MCF 10A (cell line): ENCODE measurements at regions of chr12 and their contacts with region 1.

Region 1: GRCh38 chr12:52980693-52981423 is 25.4 kb upstream of the EIF4B start:
- DNase-seq: peak; percentile 96
- H3K4me3 Mint-ChIP-seq: no peak overlapping the region
- H3K27ac Mint-ChIP-seq: no peak overlapping the region
- H3K4me1 Mint-ChIP-seq: peaks cover 7% of the 10 kb centered on the region
- H3K27me3 Mint-ChIP-seq: no peaks in the 10 kb centered on the region
- CTCF ChIP-seq: peak; percentile 95

Region 2: GRCh38 chr12:52147367-52147972 is 833.4 kb before region 1 on chr12:
- CTCF ChIA-PET with region 1: interaction called, 21 read pairs
- POLR2A ChIA-PET with region 1: no interaction called
- intact Hi-C with region 1: no loop called
- DNase-seq: peak; percentile 98
- H3K4me3 Mint-ChIP-seq: peak overlapping the region; percentile 39
- H3K27ac Mint-ChIP-seq: peak overlapping the region; percentile 97
- H3K4me1 Mint-ChIP-seq: peaks cover 76% of the 10 kb centered on the region
- H3K27me3 Mint-ChIP-seq: no peaks in the 10 kb centered on the region
- CTCF ChIP-seq: no peak

Region 3: DNA sequence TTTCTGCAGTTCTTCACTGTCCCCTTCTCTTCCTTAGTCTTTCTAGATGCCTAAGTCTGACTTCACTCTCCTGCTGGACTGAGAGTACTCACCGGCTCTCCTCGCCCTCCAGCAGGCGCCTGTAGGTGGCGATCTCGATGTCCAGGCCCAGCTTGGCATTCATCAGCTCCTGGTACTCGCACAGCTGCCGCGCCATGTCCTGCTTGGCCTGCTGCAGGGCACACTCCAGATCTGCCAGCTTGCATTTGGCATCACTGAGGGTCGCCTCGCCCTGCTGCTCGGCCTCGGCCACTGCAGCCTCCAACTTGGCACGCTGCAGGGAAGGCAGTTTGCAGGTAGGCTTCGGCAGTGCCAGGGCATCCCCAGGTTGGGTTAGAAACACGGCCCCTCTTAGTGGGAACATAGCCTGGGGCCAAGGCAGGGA is 600.6 kb before region 1 on chr12:
- CTCF ChIA-PET with region 1: interaction called, 8 read pairs
- POLR2A ChIA-PET with region 1: no interaction called
- intact Hi-C with region 1: loop called (anchors 10 kb)
- DNase-seq: peak; percentile 59
- H3K4me3 Mint-ChIP-seq: no peak overlapping the region
- H3K27ac Mint-ChIP-seq: no peak overlapping the region
- H3K4me1 Mint-ChIP-seq: no peaks in the 10 kb centered on the region
- H3K27me3 Mint-ChIP-seq: no peaks in the 10 kb centered on the region
- CTCF ChIP-seq: peak; percentile 59

Region 4: DNA sequence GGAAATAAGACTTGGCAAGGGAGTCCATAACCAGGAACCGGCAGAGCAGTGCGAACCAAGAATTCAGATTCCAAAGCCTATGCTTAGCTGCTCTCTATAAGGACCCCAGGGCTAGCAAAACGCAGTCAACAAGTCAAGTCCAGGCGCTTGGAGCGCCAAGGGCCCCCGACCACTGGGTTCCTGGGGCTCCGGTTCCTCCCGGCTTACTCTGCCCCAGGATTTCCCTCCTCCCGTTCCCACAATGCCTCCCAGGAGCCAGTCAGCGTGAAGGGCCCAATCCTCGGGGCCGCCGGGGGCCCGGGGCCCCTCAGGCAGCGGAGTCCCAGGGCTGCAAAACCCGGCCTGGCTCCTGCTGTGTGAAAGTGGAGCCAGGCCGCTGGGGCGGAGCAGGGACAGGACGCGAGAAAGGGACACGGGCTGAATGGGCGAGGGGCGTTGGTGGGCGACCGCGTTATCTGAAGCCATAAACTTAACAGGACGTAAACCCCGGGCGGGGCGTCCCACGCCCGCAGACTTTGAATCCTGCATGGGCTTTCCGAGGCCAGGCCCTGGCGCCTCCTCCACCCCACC is 77.5 kb before region 1 on chr12:
- CTCF ChIA-PET with region 1: interaction called, 747 read pairs
- POLR2A ChIA-PET with region 1: interaction called, 15 read pairs
- intact Hi-C with region 1: loop called (anchors 1 kb)
- DNase-seq: peak; percentile 87
- H3K4me3 Mint-ChIP-seq: peak overlapping the region; percentile 76
- H3K27ac Mint-ChIP-seq: peak overlapping the region; percentile 82
- H3K4me1 Mint-ChIP-seq: peaks cover 28% of the 10 kb centered on the region
- H3K27me3 Mint-ChIP-seq: no peaks in the 10 kb centered on the region
- CTCF ChIP-seq: no peak

Region 5: DNA sequence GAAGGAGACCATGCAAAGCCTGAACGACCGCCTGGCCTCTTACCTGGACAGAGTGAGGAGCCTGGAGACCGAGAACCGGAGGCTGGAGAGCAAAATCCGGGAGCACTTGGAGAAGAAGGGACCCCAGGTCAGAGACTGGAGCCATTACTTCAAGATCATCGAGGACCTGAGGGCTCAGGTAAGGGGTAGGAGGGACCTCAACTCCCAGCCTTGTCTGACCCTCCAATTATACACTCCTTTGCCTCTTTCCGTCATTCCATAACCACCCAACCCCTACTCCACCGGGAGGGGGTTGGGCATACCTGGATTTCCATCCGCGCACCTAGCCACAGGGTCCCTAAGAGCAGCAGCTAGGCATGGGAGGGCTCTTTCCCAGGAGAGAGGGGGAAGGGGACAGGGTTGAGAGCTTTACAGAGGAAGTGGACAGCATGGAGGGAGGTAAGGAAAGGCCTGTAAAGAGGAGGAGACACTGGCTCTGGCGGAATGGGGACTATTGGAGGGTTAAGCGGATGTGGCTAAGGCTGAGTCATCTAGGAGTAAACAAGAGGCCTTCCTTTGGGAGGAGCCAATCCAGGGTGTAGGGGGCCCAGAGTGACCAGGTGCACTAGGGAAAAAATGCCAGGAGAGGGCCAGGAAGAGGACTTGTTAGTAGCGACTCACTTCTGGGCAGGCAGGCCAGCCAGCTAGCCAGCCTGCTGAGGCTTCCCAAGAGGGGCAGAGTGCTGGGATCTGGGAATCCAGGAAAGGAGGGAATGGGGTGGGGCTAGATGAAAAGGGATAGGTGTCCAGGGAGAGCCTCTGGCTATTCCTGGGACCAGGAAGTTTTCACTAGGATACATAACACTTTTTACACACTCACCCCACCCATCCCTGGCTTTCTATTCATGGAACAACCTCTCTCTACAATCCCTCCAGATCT is 31.2 kb before region 1 on chr12:
- CTCF ChIA-PET with region 1: interaction called, 28 read pairs
- POLR2A ChIA-PET with region 1: interaction called, 9 read pairs
- intact Hi-C with region 1: no loop called
- DNase-seq: peak; percentile 98
- H3K4me3 Mint-ChIP-seq: peak overlapping the region; percentile 95
- H3K27ac Mint-ChIP-seq: peak overlapping the region; percentile 86
- H3K4me1 Mint-ChIP-seq: peaks cover 57% of the 10 kb centered on the region
- H3K27me3 Mint-ChIP-seq: no peaks in the 10 kb centered on the region
- CTCF ChIP-seq: no peak

Region 6: DNA sequence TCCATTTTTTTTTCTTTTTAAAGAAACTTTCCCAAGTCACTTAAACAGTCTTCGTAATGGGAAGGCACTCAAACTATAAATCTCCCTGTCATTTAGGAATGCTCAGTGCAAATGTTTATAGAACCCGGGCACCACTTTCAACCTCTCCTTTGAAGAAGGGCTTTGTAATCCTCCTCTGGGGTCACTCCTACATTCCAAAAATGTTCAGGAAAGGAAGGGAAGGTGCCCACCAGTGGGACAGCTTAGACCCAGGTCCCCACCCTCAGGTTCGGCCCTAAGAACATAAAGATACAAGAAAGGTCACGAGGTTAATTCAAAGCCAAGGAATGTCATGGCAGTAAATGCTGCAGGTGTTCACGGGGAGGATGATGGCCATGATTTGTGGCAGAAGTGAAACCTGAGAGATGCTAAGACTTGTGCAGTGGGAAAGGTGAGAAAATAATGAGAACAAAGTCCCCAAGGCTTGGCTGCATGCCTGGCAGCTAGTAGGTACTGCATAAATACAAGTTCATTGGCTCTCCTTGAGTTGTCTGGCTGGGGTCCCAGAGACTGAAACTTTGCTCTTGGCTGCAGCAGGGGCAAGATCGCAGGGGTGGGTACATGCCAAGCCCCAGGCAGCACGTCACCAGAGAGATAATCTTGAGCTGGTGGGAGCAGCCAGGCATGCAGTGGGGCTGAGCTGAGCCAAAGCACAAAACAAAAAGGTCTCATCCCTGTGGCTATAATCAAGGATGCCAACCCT is 10.9 kb before region 1 on chr12:
- CTCF ChIA-PET with region 1: interaction called, 24 read pairs
- POLR2A ChIA-PET with region 1: interaction called, 8 read pairs
- intact Hi-C with region 1: no loop called
- DNase-seq: peak; percentile 60
- H3K4me3 Mint-ChIP-seq: no peak overlapping the region
- H3K27ac Mint-ChIP-seq: peak overlapping the region; percentile 39
- H3K4me1 Mint-ChIP-seq: peaks cover 23% of the 10 kb centered on the region
- H3K27me3 Mint-ChIP-seq: no peaks in the 10 kb centered on the region
- CTCF ChIP-seq: no peak

Region 7: GRCh38 chr12:53005986-53006809 is 25.3 kb after region 1 on chr12 and contains the start of gene EIF4B:
- CTCF ChIA-PET with region 1: interaction called, 20 read pairs
- POLR2A ChIA-PET with region 1: interaction called, 8 read pairs
- intact Hi-C with region 1: no loop called
- DNase-seq: peak; percentile 99
- H3K4me3 Mint-ChIP-seq: peak within 1 kb of the TSS; percentile 98
- H3K27ac Mint-ChIP-seq: peak within 1 kb of the TSS; percentile 98
- H3K4me1 Mint-ChIP-seq: peaks cover 31% of the 10 kb centered on the region
- H3K27me3 Mint-ChIP-seq: no peaks in the 10 kb centered on the region
- CTCF ChIP-seq: no peak
- total RNA-seq, gene EIF4B: 580 and 658 TPM in 2 replicates

Region 8: DNA sequence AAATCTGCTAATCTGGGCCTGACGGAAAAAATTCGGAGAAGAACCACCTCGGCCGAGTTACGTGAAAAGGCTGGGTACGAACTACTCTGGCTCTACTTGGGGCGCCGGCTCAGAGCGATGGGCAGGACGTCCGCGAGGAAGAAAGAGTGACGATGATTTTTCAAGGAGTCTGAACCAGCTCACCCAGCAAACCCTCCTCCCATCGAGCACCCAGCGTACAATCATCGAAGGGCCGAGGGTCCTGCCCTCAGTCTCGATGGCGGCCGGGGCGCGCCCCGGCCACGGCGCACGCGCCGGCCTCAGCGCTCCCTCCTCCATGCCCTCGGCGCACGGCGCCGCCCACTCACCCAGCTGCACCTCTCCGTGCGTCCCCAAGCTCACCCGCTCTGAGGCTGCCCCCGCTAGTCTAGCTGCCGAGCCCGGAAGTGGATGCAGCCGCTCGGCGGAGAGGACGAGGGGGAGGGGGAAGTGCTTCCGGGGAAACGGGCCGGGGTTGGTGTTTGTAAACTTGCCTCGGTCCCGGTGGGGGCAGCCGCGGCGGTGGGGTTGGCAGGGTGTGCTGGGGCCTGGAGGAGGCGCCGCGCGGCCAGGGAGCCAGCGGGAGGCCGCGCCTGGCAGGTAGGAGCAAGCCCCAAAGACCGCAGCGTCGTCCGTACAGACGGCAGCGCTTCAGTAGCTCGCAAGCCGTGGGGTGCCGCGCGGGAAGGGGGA is 199.5 kb after region 1 on chr12 and contains the starts of genes CSAD and ZNF740:
- CTCF ChIA-PET with region 1: no interaction called
- POLR2A ChIA-PET with region 1: no interaction called
- intact Hi-C with region 1: no loop called
- DNase-seq: peak; percentile 96
- H3K4me3 Mint-ChIP-seq: peak within 1 kb of the TSS; percentile 95
- H3K27ac Mint-ChIP-seq: peak within 1 kb of the TSS; percentile 94
- H3K4me1 Mint-ChIP-seq: peaks cover 29% of the 10 kb centered on the region
- H3K27me3 Mint-ChIP-seq: no peaks in the 10 kb centered on the region
- CTCF ChIP-seq: no peak
- total RNA-seq, gene CSAD: 22.7 and 30.8 TPM in 2 replicates
- total RNA-seq, gene ZNF740: 34.9 and 36.2 TPM in 2 replicates

Region 9: GRCh38 chr12:53195516-53196420 is 214.9 kb after region 1 on chr12:
- CTCF ChIA-PET with region 1: no interaction called
- POLR2A ChIA-PET with region 1: no interaction called
- intact Hi-C with region 1: no loop called
- DNase-seq: peak; percentile 45
- H3K4me3 Mint-ChIP-seq: no peak overlapping the region
- H3K27ac Mint-ChIP-seq: no peak overlapping the region
- H3K4me1 Mint-ChIP-seq: peaks cover 21% of the 10 kb centered on the region
- H3K27me3 Mint-ChIP-seq: no peaks in the 10 kb centered on the region
- CTCF ChIP-seq: no peak

Region 10: GRCh38 chr12:53295070-53295890 is 314.4 kb after region 1 on chr12 and contains the start of gene PFDN5:
- CTCF ChIA-PET with region 1: no interaction called
- POLR2A ChIA-PET with region 1: no interaction called
- intact Hi-C with region 1: no loop called
- DNase-seq: peak; percentile 85
- H3K4me3 Mint-ChIP-seq: peak within 1 kb of the TSS; percentile 95
- H3K27ac Mint-ChIP-seq: peak within 1 kb of the TSS; percentile 97
- H3K4me1 Mint-ChIP-seq: peaks cover 20% of the 10 kb centered on the region
- H3K27me3 Mint-ChIP-seq: no peaks in the 10 kb centered on the region
- CTCF ChIP-seq: no peak
- total RNA-seq, gene PFDN5: 205 and 229 TPM in 2 replicates